ENCODE measurements at regions of chr11 and their contacts with region 1.

Region 1: DNA sequence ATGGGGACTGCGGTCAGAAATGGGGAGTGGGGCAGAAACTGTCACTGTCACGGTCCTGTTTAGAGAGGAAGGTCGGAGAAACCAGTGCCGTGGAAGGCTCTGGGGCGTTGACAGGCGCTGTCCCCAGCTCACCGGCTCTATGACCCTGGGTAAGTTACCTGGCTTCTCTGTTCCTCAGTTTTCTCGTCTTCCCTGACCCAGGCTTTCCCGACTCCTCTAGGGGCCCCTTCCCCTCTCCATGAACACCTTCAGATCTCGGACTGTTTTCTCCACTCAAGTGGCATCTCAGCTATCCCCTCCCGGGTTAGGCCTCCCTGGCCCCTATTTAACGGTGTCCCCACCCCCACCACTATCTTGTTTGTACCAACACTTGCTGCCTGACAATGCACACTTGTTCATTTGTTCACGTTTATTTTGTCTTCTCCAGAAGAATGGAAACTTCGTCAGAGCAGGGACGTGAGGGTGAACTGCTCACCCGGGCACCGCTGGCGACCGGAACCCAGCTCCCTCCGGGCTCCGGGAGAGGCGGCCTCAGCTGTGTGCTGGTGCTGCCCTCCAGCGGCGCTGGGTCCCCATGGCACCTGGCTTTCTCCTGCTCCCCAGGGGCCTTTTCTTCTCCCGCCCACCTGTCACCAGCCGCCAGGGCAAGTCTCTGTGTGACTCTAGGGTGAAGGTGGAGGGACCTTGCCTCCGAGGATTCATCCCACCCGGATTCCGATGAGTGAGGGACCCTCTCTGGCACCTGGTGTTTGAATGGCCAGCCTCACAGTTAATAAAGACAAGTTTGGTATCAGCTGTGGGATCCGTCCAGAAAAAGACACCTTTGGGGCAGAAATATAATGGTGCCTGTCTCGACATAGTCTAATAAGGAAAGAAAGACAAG is 33.1 kb upstream of the SLC35C1 start:
- DNase-seq: peak; percentile 83
- H3K4me3 ChIP-seq: peak overlapping the region; percentile 61
- H3K27ac ChIP-seq: no peak overlapping the region
- H3K4me1 ChIP-seq: no peaks in the 10 kb centered on the region
- H3K27me3 ChIP-seq: no peaks in the 10 kb centered on the region
- CTCF ChIP-seq: peak; percentile 91

Region 2: DNA sequence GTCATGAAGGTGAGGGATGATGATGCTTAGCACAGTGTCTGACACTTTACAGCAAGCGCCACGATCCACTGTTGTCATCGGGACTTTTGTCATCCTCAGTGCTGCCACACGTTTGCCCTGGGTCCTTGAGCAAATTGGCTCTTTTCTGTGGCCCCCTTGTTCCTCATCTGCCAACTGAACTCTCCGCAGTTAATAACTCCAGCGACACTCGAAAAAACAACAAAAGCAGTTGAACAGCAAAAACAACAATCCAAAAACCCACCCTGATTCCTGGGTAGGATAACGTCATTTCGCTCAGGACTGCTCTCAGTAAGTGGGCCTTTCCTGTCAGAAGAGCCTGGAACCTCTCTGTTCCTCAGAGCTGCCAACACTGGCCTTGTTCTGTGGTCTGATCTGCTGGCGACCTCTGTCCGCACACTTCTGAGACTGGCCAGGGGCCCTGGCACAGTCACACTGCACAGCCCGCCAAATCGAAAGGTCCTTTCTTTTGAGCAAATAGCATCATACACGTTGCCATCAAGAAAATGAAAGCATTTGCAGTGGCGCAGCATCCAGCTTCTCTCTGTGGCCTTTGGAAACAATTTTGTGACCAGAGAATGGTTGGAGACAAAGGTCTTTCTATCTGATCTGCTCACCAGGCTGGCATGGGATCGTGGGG is 405.7 kb before region 1 on chr11:
- intact Hi-C with region 1: loop called (anchors 10 kb)
- DNase-seq: no peak
- H3K4me3 ChIP-seq: no peak overlapping the region
- H3K27ac ChIP-seq: no peak overlapping the region
- H3K4me1 ChIP-seq: no peaks in the 10 kb centered on the region
- H3K27me3 ChIP-seq: no peaks in the 10 kb centered on the region
- CTCF ChIP-seq: no peak

Measured in colonic mucosa (tissue), 4 donors.